Astrocyte of the cerebellum (primary cell): ENCODE measurements at regions of chr4 and their contacts with region 1.

Region 1: GRCh38 chr4:89868999-89869589 is 25.6 kb upstream of the MMRN1 start:
- DNase-seq: peak; percentile 1
- H3K4me3 ChIP-seq: no peak overlapping the region
- CTCF ChIP-seq: peak; percentile 15

Region 2: DNA sequence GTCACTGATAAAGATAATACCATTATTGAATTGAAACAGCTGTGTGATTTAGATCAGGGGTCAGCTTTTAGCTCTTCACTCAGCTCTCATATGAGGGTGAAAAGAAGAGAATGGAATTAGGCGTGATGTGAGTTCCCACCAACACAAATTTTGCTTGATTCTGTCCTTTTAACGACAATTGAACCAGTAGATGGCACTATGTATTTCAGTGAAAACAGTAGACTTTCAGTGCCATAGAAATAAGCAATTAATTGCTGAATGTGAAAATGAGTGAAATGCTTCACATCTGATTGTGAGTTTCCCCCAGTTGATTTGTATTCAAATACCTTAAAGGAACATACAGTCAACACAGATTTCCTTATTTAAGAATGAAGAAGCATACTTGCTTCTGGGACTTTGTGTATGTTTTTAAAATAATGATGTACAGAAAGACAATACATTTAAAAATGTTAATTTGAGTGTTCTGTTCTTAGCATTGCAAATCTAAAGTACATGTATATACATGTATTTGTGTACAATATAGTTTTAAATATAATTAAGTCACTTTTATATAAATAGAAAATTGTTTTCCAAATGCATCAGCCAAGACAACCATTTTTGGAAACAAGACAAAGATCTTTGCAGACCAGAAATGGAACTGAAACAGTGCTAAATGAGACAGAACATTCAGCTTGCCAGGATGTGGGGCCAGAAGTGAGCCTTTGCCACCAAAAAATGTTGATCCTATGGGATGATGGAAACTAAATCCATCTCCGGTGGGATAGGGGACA is 211.0 kb before region 1 on chr4:
- in situ Hi-C with region 1: loop called (anchors 25 kb)
- DNase-seq: peak; percentile 31
- H3K4me3 ChIP-seq: no peak overlapping the region
- CTCF ChIP-seq: peak; percentile 35

Region 3: GRCh38 chr4:89939546-89939945 is 70.5 kb after region 1 on chr4:
- in situ Hi-C with region 1: no loop called
- DNase-seq: no peak
- H3K4me3 ChIP-seq: no peak overlapping the region
- CTCF ChIP-seq: no peak